Activated CD4-positive, alpha-beta T cell treated with anti-CD3 and anti-CD28 coated beads for 36 hours (primary cell): ENCODE measurements at regions of chr9 and their contacts with region 1.

Region 1: DNA sequence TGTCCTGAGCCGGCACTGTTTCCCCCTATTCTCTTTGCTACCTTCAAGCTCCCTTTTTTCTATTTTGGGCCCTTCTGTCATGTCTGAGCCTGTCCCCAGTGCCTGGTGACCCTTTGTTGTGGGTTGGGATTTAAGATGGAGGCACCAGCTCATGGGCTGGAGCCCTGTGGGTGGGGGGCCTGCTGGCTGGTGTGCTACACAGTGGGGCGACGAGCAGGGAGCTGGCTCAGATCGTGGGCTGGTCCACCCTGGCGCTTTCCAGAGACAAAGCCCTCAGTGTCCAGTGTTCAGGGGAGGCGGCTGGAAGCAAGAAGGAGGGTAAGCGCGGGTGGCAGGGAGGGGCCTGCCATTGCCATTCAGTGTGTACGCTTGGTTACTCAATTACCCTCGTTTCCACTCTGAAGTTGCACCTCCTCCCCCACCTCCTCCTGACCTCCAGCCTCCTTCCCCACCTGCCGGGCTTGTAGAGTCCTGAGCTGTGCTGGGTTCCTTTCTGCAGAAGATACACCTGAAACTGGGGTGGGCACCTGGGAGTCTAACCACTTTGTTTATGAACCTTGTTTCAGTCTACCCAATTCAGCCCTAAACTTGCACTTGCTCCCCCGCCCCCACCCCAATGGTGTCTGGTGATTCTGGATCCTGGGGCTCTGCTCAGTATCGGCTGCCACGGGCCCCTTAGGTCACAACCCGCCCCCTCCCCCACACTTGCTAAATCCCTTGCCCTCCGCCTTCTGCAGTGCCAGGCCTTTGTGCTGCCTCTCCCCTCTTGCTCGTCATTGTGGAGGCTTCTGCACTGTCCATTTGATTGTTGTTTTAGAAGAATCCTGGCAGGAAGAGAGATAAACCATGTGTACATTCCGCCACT is 49.9 kb downstream of the MVB12B start:
- DNase-seq: no peak
- ATAC-seq: no peak
- H3K4me3 Mint-ChIP-seq: no peak overlapping the region
- H3K27ac Mint-ChIP-seq: no peak overlapping the region
- H3K4me1 Mint-ChIP-seq: peaks cover 21% of the 10 kb centered on the region
- H3K27me3 Mint-ChIP-seq: no peaks in the 10 kb centered on the region

Region 2: DNA sequence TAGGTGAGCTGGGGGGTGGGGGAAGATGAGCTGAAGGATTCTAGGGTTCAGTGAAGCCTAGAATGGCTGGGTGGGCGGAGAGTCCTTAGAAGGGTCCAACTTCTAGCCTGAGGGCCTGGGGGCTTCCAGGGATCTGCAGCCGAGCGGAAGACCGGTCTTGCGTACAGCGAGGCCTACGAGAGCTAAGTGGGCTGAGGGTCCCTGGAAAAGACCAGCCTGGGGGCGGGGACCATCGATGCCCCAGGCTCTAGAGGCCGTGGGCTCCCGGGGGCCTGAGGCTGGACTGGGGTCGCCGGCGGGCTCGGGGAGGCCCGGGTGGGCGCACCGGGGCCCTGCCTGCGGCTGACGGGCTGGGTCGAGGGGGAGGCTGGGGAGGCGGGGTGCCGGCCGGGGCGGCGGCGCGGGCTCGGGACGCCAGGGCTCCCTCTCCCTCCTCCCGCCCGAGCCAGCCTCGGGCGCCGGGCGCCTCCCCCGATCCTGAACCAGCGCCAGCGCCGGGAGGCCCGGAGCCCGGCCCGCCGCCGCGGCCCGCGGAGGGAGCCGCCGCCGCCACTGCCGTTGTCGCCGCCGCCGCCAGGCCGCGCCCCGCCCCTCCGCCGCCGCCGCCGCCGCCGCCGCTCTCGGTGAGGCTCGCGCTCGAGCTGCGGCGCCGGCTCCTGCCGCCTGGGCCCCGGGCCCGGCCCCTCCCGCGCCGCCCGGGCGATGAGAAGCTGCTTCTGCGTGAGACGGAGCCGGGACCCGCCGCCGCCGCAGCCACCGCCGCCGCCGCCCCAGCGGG is 50.1 kb before region 1 on chr9 and contains the start of gene MVB12B:
- CTCF ChIA-PET with region 1: no interaction called
- POLR2A ChIA-PET with region 1: interaction called, 10 read pairs
- intact Hi-C with region 1: no loop called
- DNase-seq: peak; percentile 68
- ATAC-seq: peak; percentile 75
- H3K4me3 Mint-ChIP-seq: peak within 1 kb of the TSS; percentile 63
- H3K27ac Mint-ChIP-seq: peak within 1 kb of the TSS; percentile 47
- H3K4me1 Mint-ChIP-seq: peaks cover 31% of the 10 kb centered on the region
- H3K27me3 Mint-ChIP-seq: peaks cover 2% of the 10 kb centered on the region
- total RNA-seq, gene MVB12B: 3.0 TPM